ENCODE measurements at regions of chr17 and their contacts with region 1.

Region 1: DNA sequence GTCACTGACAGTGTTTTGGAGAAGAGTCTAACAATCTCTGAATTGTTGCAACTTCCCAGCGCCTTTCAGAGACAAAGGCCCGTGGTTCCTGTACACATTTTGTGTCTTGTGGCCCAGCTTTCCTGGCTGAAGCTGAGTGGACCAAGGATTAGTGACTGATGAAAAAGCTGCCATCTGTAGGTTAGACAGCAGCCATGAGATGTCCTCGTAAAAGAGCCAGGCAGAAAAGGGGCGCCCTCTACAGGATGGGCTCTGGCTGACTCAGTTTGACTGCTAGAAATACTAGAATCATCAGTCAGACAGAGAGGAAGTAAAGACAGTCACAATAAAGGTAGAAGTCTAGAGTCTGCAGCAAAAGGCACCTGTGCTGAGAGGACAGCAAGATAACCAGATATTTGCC is 26.5 kb upstream of the NF1 start:
- DNase-seq: peak; percentile 82
- ATAC-seq: peak; percentile 91
- H3K4me3 Mint-ChIP-seq: no peak overlapping the region
- H3K27ac Mint-ChIP-seq: no peak overlapping the region
- H3K4me1 Mint-ChIP-seq: peaks cover 2% of the 10 kb centered on the region
- H3K27me3 Mint-ChIP-seq: no peaks in the 10 kb centered on the region

Region 2: GRCh38 chr17:30701498-30701989 is 366.7 kb before region 1 on chr17:
- CTCF ChIA-PET with region 1: no interaction called
- POLR2A ChIA-PET with region 1: no interaction called
- intact Hi-C with region 1: no loop called
- DNase-seq: no peak
- ATAC-seq: no peak
- H3K4me3 Mint-ChIP-seq: no peak overlapping the region
- H3K27ac Mint-ChIP-seq: no peak overlapping the region
- H3K4me1 Mint-ChIP-seq: peaks cover 8% of the 10 kb centered on the region
- H3K27me3 Mint-ChIP-seq: peaks cover 22% of the 10 kb centered on the region

Region 3: GRCh38 chr17:30761058-30761457 is 307.2 kb before region 1 on chr17:
- CTCF ChIA-PET with region 1: no interaction called
- POLR2A ChIA-PET with region 1: no interaction called
- intact Hi-C with region 1: no loop called
- DNase-seq: no peak
- ATAC-seq: no peak
- H3K4me3 Mint-ChIP-seq: no peak overlapping the region
- H3K27ac Mint-ChIP-seq: no peak overlapping the region
- H3K4me1 Mint-ChIP-seq: no peaks in the 10 kb centered on the region
- H3K27me3 Mint-ChIP-seq: no peaks in the 10 kb centered on the region

Region 4: GRCh38 chr17:31008374-31009041 is 59.8 kb before region 1 on chr17:
- CTCF ChIA-PET with region 1: no interaction called
- POLR2A ChIA-PET with region 1: no interaction called
- intact Hi-C with region 1: loop called in 1 of 2 experiments (anchors 5 kb)
- DNase-seq: peak; percentile 70
- ATAC-seq: peak; percentile 71
- H3K4me3 Mint-ChIP-seq: peak overlapping the region; percentile 73
- H3K27ac Mint-ChIP-seq: peak overlapping the region; percentile 75
- H3K4me1 Mint-ChIP-seq: peaks cover 18% of the 10 kb centered on the region
- H3K27me3 Mint-ChIP-seq: peaks cover 5% of the 10 kb centered on the region

Region 5: GRCh38 chr17:31048775-31049174 is 19.5 kb before region 1 on chr17:
- CTCF ChIA-PET with region 1: interaction called, 3 read pairs
- POLR2A ChIA-PET with region 1: no interaction called
- intact Hi-C with region 1: loop called in 1 of 2 experiments (anchors 2 kb)
- DNase-seq: no peak
- ATAC-seq: no peak
- H3K4me3 Mint-ChIP-seq: no peak overlapping the region
- H3K27ac Mint-ChIP-seq: no peak overlapping the region
- H3K4me1 Mint-ChIP-seq: peaks cover 7% of the 10 kb centered on the region
- H3K27me3 Mint-ChIP-seq: no peaks in the 10 kb centered on the region

Measured in activated CD4-positive, alpha-beta T cell treated with anti-CD3 and anti-CD28 coated beads for 36 hours (primary cell).